Endothelial cell of umbilical vein (primary cell): ENCODE measurements at regions of chr12 and their contacts with region 1.

Region 1: DNA sequence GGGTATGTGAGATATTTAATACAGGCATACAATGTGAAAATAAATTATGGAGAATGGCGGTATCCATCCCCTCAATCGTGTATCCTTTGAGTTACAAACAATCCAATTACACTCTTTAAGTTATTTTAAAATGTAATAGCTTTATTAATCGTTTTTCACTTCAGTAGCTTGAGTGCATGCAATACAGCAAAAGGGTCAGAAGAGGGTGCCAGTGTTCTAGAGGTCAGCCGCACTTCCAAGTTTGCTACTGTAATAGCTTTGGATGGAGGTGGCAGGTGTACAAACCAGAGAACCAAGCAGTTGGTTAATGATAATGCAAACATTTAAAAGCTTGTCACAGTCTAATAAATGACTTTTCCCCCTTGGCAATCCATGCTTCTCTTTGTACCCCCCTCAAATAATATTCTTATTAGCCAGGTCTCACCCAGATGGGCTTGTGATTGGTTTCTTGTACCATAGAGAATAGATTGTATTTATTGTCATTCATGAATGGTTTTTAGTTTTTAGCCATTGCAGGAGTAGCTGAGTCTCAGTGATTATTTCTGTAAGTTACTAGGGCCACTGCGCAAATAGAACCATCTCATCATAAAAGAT is 127.0 kb downstream of the ERC1 start:
- DNase-seq: peak; percentile 81
- H3K4me3 ChIP-seq: no peak overlapping the region
- H3K27ac ChIP-seq: no peak overlapping the region
- H3K4me1 ChIP-seq: peaks cover 13% of the 10 kb centered on the region
- H3K27me3 ChIP-seq: no peaks in the 10 kb centered on the region
- CTCF ChIP-seq: peak; percentile 66 to 79
- POLR2A ChIP-seq: no peak

Region 2: GRCh38 chr12:1184402-1184801 is 66.3 kb after region 1 on chr12:
- CTCF ChIA-PET with region 1: interaction called, 10 read pairs
- POLR2A ChIA-PET with region 1: no interaction called
- dilution Hi-C with region 1: no loop called
- intact Hi-C with region 1: no loop called
- DNase-seq: peak; percentile 61
- H3K4me3 ChIP-seq: no peak overlapping the region
- H3K27ac ChIP-seq: peak overlapping the region; percentile 74
- H3K4me1 ChIP-seq: peaks cover 21% of the 10 kb centered on the region
- H3K27me3 ChIP-seq: no peaks in the 10 kb centered on the region
- CTCF ChIP-seq: no peak
- POLR2A ChIP-seq: no peak

Region 3: GRCh38 chr12:1357171-1357570 is 239.1 kb after region 1 on chr12:
- CTCF ChIA-PET with region 1: interaction called, 10 read pairs
- POLR2A ChIA-PET with region 1: no interaction called
- dilution Hi-C with region 1: no loop called
- intact Hi-C with region 1: no loop called
- DNase-seq: no peak
- H3K4me3 ChIP-seq: no peak overlapping the region
- H3K27ac ChIP-seq: no peak overlapping the region
- H3K4me1 ChIP-seq: peaks cover 3% of the 10 kb centered on the region
- H3K27me3 ChIP-seq: no peaks in the 10 kb centered on the region
- CTCF ChIP-seq: no peak
- POLR2A ChIP-seq: no peak

Region 4: DNA sequence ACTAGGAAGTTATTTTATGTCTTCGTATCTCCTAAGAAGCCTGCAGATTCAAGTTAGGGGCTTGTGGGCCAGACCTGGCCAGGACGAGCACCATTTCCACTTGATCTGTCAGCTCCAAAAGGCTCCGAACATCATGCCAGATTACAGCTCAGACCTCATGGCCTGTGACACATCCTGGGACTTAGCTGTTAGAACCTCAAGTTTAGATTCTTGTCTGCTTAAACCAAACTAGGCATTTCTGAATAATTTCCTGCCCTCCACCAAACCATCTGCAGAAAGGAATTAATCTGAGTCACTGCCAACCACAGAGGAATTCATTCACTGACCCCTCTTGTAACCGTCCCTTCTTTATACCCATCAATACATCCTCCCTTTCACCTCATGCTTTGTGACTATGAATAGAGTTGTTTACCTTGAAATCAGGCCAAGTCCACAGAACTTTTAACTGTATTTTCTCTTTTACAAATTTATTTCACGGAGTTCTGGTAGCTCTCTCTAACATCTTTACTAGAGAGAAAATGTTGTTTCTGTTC is 356.0 kb after region 1 on chr12:
- CTCF ChIA-PET with region 1: interaction called, 40 read pairs
- POLR2A ChIA-PET with region 1: no interaction called
- dilution Hi-C with region 1: no loop called
- intact Hi-C with region 1: loop called (anchors 5 kb)
- DNase-seq: peak; percentile 87
- H3K4me3 ChIP-seq: peak overlapping the region in 1 of 3 experiments; percentile 33
- H3K27ac ChIP-seq: peak overlapping the region; percentile 53
- H3K4me1 ChIP-seq: peaks cover 27% of the 10 kb centered on the region
- H3K27me3 ChIP-seq: peaks cover 9 to 32% of the 10 kb centered on the region in 2 experiments
- CTCF ChIP-seq: no peak
- POLR2A ChIP-seq: peak; percentile 52

Region 5: DNA sequence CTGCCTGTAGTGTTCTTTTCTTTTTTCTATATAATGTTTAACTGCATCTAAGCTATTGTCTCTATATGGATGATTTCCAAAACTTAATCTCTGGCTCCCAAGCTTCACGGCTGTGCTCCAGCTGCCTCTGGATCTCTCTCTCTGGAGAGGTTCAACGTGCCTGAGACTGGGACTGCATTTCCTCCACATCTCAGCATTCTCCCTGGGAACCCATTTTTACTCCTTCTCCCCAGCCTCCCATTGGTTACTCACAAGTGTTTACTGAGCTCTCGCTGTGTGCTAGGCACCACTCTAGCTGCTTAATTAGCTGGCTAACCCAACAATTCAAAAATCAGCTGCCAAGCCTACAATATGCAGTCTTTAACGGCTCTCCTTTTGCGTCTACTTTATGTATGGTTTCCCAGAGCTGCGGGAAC is 441.6 kb after region 1 on chr12:
- CTCF ChIA-PET with region 1: interaction called, 10 read pairs
- POLR2A ChIA-PET with region 1: no interaction called
- dilution Hi-C with region 1: loop called (anchors 25 kb)
- intact Hi-C with region 1: no loop called
- DNase-seq: no peak
- H3K4me3 ChIP-seq: no peak overlapping the region
- H3K27ac ChIP-seq: no peak overlapping the region
- H3K4me1 ChIP-seq: no peaks in the 10 kb centered on the region
- H3K27me3 ChIP-seq: peaks cover 11 to 19% of the 10 kb centered on the region in 2 experiments
- CTCF ChIP-seq: no peak
- POLR2A ChIP-seq: no peak

Region 6: GRCh38 chr12:1605129-1606020 is 487.3 kb after region 1 on chr12:
- CTCF ChIA-PET with region 1: interaction called, 32 read pairs
- POLR2A ChIA-PET with region 1: interaction called, 3 read pairs
- dilution Hi-C with region 1: no loop called
- intact Hi-C with region 1: no loop called
- DNase-seq: peak; percentile 81
- H3K4me3 ChIP-seq: peak overlapping the region in 2 of 3 experiments; percentile 27 to 28
- H3K27ac ChIP-seq: peak overlapping the region; percentile 39
- H3K4me1 ChIP-seq: peaks cover 9% of the 10 kb centered on the region
- H3K27me3 ChIP-seq: no peaks in the 10 kb centered on the region
- CTCF ChIP-seq: peak; percentile 73 to 85
- POLR2A ChIP-seq: no peak